ENCODE measurements at regions of chr5 and their contacts with region 1.

Region 1: DNA sequence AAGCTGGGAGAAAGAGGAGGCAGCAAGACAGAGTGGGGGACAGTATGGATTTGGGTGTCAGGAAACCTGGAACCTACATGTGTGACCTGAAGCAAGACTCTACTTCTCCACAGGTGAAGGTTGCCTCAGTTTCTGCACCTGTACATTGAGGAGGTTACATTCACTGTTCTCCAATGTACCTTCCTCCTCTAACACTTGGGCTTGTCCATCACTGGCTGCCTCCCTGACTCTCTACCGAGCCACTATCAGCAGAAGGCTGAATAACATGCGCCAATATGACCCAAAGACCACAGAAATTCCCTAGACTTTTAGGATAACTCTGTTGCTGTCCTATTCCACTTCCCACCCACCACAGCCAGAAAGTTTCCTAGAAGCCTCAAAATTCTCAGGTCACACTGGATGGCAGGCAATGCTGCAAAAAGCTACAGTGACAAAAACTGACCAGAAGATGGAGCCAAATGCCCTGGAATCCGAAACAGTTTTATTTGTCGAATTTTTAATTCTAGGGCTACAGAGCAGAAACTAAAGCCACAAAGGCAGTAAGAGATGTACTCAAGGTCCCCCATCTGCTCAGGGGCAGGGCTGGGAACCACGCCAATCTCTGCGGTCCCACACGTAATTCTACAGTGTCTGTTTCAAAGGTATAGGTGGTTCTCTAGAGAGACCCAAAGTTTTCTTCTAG is 64.4 kb downstream of the FAM114A2 start:
- DNase-seq: peak; percentile 58
- H3K4me3 Mint-ChIP-seq: no peak overlapping the region
- H3K27ac Mint-ChIP-seq: no peak overlapping the region
- H3K4me1 Mint-ChIP-seq: no peaks in the 10 kb centered on the region
- H3K27me3 Mint-ChIP-seq: peaks cover 3% of the 10 kb centered on the region

Region 2: GRCh38 chr5:153987306-153987705 is 13.0 kb after region 1 on chr5:
- CTCF ChIA-PET with region 1: interaction called, 13 read pairs
- intact Hi-C with region 1: no loop called
- DNase-seq: no peak
- H3K4me3 Mint-ChIP-seq: no peak overlapping the region
- H3K27ac Mint-ChIP-seq: no peak overlapping the region
- H3K4me1 Mint-ChIP-seq: no peaks in the 10 kb centered on the region
- H3K27me3 Mint-ChIP-seq: no peaks in the 10 kb centered on the region

Region 3: DNA sequence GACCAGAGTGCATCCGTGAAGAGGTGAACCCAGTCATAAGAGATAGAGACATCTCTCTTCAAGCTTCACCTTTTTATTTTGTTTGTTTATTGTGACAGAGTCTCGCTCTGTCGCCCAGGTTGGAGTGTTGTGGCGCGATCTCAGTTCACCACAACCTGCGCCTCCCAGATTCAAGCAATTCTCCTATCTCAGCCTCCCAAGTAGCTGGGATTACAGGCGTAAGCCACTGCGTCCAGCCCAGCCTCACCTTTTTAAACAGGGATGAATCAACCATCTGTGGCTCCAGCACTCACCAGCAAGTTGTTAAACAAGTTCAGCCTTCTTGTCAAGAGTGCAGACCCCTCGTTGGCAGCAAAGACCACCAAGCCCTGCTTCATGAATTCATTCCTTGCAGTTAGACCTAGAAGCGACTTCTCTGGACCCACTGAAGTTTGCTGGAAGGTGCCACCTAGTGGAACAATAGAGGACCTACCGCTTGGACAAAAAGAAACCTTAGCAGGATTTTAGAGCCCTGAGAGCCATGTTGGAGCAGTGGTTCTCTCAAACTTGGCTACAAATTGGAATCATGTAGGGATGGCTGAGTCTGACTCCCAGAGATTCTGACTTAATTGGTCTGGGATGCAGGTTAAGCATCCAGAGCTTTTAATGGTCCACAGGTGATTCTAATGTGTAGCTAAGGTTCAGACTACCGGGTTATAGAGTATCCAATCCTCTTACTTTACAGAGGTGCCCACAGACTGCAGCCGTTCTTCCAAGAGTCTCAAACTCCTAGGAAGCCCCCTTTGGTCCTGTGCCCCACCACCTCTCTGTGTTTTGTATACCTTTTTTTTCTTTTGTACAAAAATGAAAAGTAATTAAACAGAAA is 205.8 kb after region 1 on chr5:
- CTCF ChIA-PET with region 1: interaction called, 3 read pairs
- intact Hi-C with region 1: loop called (anchors 1 kb)
- DNase-seq: peak; percentile 52
- H3K4me3 Mint-ChIP-seq: no peak overlapping the region
- H3K27ac Mint-ChIP-seq: no peak overlapping the region
- H3K4me1 Mint-ChIP-seq: no peaks in the 10 kb centered on the region
- H3K27me3 Mint-ChIP-seq: peaks cover 4% of the 10 kb centered on the region

Measured in activated naive CD4-positive, alpha-beta T cell treated with anti-CD3 and anti-CD28 coated beads for 36 hours (primary cell).